Cardiac septum (tissue), 1 donor: ENCODE measurements at regions of chr19 and their contacts with region 1.

Region 1: GRCh38 chr19:9945319-9945966 is 9.1 kb upstream of the OLFM2 start:
- DNase-seq: peak; percentile 89

Region 2: DNA sequence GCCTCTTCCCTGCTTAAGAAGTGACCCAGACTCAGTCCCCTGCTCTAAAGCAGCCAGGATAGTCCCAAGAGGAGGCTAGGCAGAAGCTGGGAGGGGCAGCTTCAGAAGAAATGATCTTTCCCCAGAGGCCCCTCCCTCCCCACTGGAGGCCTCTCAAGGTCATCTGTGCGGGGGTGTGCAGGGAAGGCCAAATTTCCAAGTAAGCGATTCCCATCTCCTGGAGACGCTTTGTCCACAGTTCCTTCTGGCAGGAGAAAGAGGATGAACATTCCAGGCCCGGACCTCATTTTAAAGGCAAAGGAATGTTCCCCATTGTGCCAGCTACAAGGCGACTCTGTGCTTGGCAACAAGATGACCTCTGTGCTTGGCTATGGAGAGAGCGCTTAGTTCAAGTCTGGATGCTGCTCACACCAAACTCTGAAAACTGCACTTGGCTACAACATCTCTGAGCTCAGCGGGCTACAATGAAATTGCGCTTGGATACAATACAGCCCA is 41.4 kb after region 1 on chr19:
- intact Hi-C with region 1: loop called (anchors 2 kb)
- DNase-seq: no peak

Region 3: GRCh38 chr19:10006335-10006708 is 60.9 kb after region 1 on chr19:
- intact Hi-C with region 1: loop called (anchors 1 kb)
- DNase-seq: no peak

Region 4: GRCh38 chr19:10027158-10027693 is 81.8 kb after region 1 on chr19:
- intact Hi-C with region 1: loop called (anchors 5 kb)
- DNase-seq: no peak